PC-9 (cell line): ENCODE measurements at regions of chr6 and their contacts with region 1.

Region 1: GRCh38 chr6:100565439-100566104 is 100.9 kb upstream of the SIM1 start:
- DNase-seq: no peak
- H3K4me3 ChIP-seq: no peak overlapping the region
- H3K27ac ChIP-seq: no peak overlapping the region
- H3K4me1 ChIP-seq: no peaks in the 10 kb centered on the region
- H3K27me3 ChIP-seq: no peaks in the 10 kb centered on the region
- CTCF ChIP-seq: no peak

Region 2: GRCh38 chr6:100202417-100203194 is 363.0 kb before region 1 on chr6:
- CTCF ChIA-PET with region 1: no interaction called
- POLR2A ChIA-PET with region 1: interaction called, 20 read pairs
- intact Hi-C with region 1: no loop called
- DNase-seq: peak; percentile 31 to 83
- H3K4me3 ChIP-seq: no peak overlapping the region
- H3K27ac ChIP-seq: peak overlapping the region; percentile 95
- H3K4me1 ChIP-seq: peaks cover 16% of the 10 kb centered on the region
- H3K27me3 ChIP-seq: no peaks in the 10 kb centered on the region
- CTCF ChIP-seq: no peak